A673 (cell line): ENCODE measurements at regions of chr6 and their contacts with region 1.

Region 1: GRCh38 chr6:159693128-159693893 is at the start of gene SOD2:
- DNase-seq: peak; percentile 87
- H3K4me3 ChIP-seq: peak within 1 kb of the TSS; percentile 97
- H3K27ac ChIP-seq: peak within 1 kb of the TSS; percentile 93
- H3K4me1 ChIP-seq: peaks cover 9% of the 10 kb centered on the region
- H3K27me3 ChIP-seq: no peaks in the 10 kb centered on the region
- CTCF ChIP-seq: no peak
- total RNA-seq, gene SOD2: 139 and 159 TPM in 2 replicates

Region 2: GRCh38 chr6:159042003-159042825 is 651.1 kb before region 1 on chr6:
- CTCF ChIA-PET with region 1: no interaction called
- POLR2A ChIA-PET with region 1: no interaction called
- intact Hi-C with region 1: no loop called
- DNase-seq: peak; percentile 59
- H3K4me3 ChIP-seq: no peak overlapping the region
- H3K27ac ChIP-seq: no peak overlapping the region
- H3K4me1 ChIP-seq: no peaks in the 10 kb centered on the region
- H3K27me3 ChIP-seq: no peaks in the 10 kb centered on the region
- CTCF ChIP-seq: peak; percentile 99

Region 3: GRCh38 chr6:159726918-159727716 is 33.8 kb after region 1 on chr6 and contains the start of gene WTAP:
- CTCF ChIA-PET with region 1: no interaction called
- POLR2A ChIA-PET with region 1: interaction called, 5 read pairs
- intact Hi-C with region 1: loop called (anchors 5 kb)
- DNase-seq: peak; percentile 97
- H3K4me3 ChIP-seq: peak within 1 kb of the TSS; percentile 93
- H3K27ac ChIP-seq: peak within 1 kb of the TSS; percentile 99
- H3K4me1 ChIP-seq: peaks cover 7% of the 10 kb centered on the region
- H3K27me3 ChIP-seq: no peaks in the 10 kb centered on the region
- CTCF ChIP-seq: no peak
- total RNA-seq, gene WTAP: 109 and 110 TPM in 2 replicates

Region 4: DNA sequence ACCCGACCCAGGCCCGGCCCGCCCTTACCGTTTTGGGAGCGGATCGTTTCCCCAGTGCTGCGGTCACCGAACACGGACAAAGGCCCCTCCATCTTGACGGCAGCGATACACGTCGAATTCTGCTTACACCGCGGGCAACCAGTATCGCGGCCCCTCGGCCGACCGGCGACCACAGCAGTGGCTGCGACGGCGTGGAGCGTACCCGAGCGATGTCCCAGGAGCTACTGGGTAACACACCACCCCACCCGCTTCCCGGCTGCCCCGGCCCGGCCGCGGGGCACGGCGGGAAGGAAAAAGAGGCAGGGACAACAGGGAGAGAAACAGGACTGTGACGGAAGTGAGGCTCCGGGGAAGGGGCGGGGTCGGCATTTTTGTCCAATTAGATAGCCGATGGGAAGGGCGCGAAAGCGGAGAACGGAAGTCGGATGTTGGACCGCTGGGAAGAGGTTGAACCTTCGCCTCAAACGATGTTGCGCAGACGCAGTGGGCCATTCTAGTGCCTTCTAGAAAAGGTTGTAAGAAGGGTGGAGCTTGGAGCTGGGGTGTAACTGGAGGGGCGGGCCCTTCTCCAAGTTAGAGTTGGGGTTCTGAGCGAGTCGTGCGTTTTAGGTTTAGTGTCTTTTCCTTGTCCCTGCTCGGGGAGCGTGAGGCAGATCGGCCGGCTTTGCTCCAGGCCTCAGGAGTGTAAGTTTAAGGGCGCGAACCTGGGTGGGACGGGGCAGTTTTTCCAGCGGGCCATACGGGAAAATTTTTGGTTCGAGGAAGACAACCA is 96.3 kb after region 1 on chr6 and contains the start of gene TCP1:
- CTCF ChIA-PET with region 1: no interaction called
- POLR2A ChIA-PET with region 1: no interaction called
- intact Hi-C with region 1: loop called (anchors 2 kb)
- DNase-seq: peak; percentile 100
- H3K4me3 ChIP-seq: peak within 1 kb of the TSS; percentile 88
- H3K27ac ChIP-seq: peak within 1 kb of the TSS; percentile 91
- H3K4me1 ChIP-seq: peaks cover 23% of the 10 kb centered on the region
- H3K27me3 ChIP-seq: no peaks in the 10 kb centered on the region
- CTCF ChIP-seq: no peak
- total RNA-seq, gene TCP1: 505 and 528 TPM in 2 replicates

Region 5: GRCh38 chr6:159806021-159806458 is 112.7 kb after region 1 on chr6:
- CTCF ChIA-PET with region 1: no interaction called
- POLR2A ChIA-PET with region 1: no interaction called
- intact Hi-C with region 1: no loop called
- DNase-seq: no peak
- H3K4me3 ChIP-seq: no peak overlapping the region
- H3K27ac ChIP-seq: no peak overlapping the region
- H3K4me1 ChIP-seq: no peaks in the 10 kb centered on the region
- H3K27me3 ChIP-seq: no peaks in the 10 kb centered on the region
- CTCF ChIP-seq: no peak

Region 6: DNA sequence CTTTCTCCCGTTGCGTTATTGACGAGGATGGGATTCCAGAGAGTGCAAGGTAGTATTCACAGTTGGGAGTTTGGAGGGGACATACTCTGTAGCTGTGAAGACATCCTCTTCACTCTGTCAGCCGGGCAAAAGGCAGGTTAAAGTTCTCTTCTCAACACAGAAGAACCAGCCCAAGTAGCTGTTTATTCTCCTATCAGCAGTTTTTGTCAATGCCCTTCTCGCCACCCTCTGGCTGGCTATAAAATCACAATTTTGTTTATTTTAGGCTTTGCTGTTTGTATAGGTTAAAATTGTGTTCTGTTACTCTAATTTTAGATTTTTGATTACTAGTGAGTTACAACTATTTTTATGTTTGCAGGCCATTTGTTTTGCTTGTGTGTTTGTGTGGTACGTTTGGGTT is 159.6 kb after region 1 on chr6:
- CTCF ChIA-PET with region 1: interaction called, 7 read pairs
- POLR2A ChIA-PET with region 1: no interaction called
- intact Hi-C with region 1: loop called (anchors 2 kb)
- DNase-seq: peak; percentile 23
- H3K4me3 ChIP-seq: no peak overlapping the region
- H3K27ac ChIP-seq: no peak overlapping the region
- H3K4me1 ChIP-seq: no peaks in the 10 kb centered on the region
- H3K27me3 ChIP-seq: peaks cover 13% of the 10 kb centered on the region
- CTCF ChIP-seq: peak; percentile 50

Region 7: DNA sequence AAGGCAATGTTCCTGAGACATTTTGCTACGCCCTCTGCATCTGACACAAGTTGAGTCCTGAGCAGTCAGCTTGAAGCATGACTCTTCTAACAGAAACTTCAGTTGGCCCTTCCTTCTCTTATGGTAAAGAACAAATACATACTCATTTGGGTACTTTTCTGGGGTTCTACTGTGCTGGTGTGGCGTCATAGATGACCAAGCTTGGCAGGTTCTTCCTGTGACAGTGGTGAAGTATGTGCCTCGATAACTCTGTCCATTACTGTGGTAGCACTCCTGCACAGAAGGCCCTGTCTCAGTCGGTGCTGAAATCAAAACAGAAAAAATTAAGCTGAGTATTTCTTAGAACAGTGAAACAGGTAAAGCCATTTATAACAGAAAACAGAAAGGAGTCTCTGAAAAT is 807.3 kb after region 1 on chr6:
- CTCF ChIA-PET with region 1: no interaction called
- POLR2A ChIA-PET with region 1: no interaction called
- intact Hi-C with region 1: no loop called
- DNase-seq: no peak
- H3K4me3 ChIP-seq: no peak overlapping the region
- H3K27ac ChIP-seq: no peak overlapping the region
- H3K4me1 ChIP-seq: no peaks in the 10 kb centered on the region
- H3K27me3 ChIP-seq: peaks cover 10% of the 10 kb centered on the region
- CTCF ChIP-seq: no peak